ENCODE measurements at regions of chr3 and their contacts with region 1.

Region 1: GRCh38 chr3:142447852-142448823 is at the start of gene XRN1:
- DNase-seq: peak; percentile 97
- H3K4me3 Mint-ChIP-seq: peak within 1 kb of the TSS; percentile 95
- H3K27ac Mint-ChIP-seq: peak within 1 kb of the TSS; percentile 96
- H3K4me1 Mint-ChIP-seq: peaks cover 31% of the 10 kb centered on the region
- H3K27me3 Mint-ChIP-seq: no peaks in the 10 kb centered on the region
- total RNA-seq, gene XRN1: 58.4 to 67.8 TPM

Region 2: GRCh38 chr3:141487521-141488252 is 960.5 kb before region 1 on chr3:
- CTCF ChIA-PET with region 1: no interaction called
- POLR2A ChIA-PET with region 1: no interaction called
- intact Hi-C with region 1: loop called (anchors 2 kb)
- DNase-seq: peak; percentile 94
- H3K4me3 Mint-ChIP-seq: peak overlapping the region; percentile 84
- H3K27ac Mint-ChIP-seq: peak overlapping the region; percentile 94
- H3K4me1 Mint-ChIP-seq: peaks cover 67% of the 10 kb centered on the region
- H3K27me3 Mint-ChIP-seq: no peaks in the 10 kb centered on the region

Region 3: DNA sequence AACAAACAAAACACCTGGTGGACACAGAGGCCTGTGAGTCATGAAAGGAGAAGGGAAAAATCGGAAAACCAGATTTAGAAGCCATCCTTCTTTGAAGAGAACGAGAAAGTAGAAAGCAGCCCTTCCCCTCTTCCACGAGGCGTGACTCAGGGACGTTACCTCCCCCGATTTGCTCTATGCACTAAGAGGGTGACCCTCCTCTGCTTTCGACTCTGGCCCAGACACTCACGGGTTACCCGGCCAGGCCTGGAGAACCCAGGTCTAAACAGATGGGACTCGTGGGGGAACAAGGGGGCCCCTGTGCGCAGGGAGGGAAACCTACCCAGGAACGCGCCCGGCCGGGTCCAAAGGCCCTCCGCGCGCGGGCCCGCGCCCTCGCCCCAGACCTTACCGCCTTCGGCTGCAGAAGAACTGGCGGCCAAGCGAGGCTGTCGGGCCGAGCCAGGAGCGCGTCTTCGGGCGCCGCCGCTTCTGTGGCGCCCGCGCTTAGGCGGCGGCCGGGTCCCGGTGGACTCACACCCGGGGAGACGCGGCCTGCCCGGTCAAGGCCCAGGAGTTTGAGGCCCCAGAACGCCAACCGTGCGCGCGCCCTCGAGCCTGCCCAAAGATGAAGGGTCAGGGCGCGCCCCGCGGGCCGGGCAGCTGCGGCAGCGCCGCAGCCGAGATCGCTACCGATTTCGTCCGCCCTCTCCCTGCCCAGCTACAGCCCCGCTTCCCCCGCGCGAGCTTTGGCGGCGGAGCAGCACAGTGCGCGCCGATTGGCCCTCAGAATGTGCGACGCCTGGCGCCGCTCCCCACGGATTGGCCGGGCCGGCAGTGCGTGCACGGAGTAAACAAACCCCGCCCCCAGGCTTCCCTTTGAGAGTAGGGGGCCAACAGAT is 299.1 kb before region 1 on chr3 and contains the start of gene TFDP2:
- CTCF ChIA-PET with region 1: no interaction called
- POLR2A ChIA-PET with region 1: no interaction called
- intact Hi-C with region 1: loop called (anchors 5 kb)
- DNase-seq: peak; percentile 90
- H3K4me3 Mint-ChIP-seq: peak within 1 kb of the TSS; percentile 79
- H3K27ac Mint-ChIP-seq: no peak within 1 kb of the TSS
- H3K4me1 Mint-ChIP-seq: peaks cover 26% of the 10 kb centered on the region
- H3K27me3 Mint-ChIP-seq: no peaks in the 10 kb centered on the region
- total RNA-seq, gene TFDP2: 19.1 to 21.5 TPM

Region 4: DNA sequence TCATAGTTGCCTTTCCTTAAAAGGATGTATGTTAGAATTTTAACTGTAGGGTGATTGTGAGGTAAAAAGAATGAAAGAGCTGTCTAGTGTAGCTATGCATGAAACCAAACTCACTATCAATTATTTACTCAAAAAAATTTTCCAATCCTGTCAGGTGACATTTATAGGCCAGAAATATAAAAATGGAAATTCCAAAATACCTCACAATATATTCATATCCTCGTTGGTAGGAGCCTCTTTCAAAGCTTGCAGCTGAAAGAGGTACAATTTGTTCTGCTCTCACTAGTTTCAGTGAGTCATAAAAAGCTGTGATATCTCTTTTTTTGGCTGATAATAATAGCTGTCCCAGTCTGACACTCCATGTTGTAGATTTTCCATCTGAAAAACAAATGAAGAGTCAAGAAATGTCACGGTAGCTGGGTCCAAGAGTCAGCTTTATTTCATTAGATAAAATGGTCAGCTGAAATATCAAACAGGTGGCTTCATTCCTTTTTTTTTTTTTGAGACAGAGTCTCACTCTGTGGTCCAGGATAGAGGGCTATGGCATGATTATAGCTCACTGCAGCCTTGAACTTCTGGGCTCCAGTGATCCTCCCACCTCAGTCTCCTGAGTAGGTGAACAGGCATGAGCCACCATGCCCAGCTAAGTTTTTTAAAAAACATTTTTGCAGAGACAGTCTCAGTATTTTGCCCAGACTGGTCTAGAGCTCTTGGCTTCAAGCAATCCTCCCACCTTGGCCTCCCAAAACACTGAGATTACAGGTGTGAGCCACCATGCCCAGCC is 50.5 kb after region 1 on chr3:
- CTCF ChIA-PET with region 1: interaction called, 3 read pairs
- POLR2A ChIA-PET with region 1: no interaction called
- intact Hi-C with region 1: loop called (anchors 2 kb)
- DNase-seq: no peak
- H3K4me3 Mint-ChIP-seq: no peak overlapping the region
- H3K27ac Mint-ChIP-seq: peak overlapping the region; percentile 54
- H3K4me1 Mint-ChIP-seq: peaks cover 17% of the 10 kb centered on the region
- H3K27me3 Mint-ChIP-seq: no peaks in the 10 kb centered on the region

Region 5: GRCh38 chr3:142723968-142724681 is 276.0 kb after region 1 on chr3 and contains the start of gene TRPC1:
- CTCF ChIA-PET with region 1: no interaction called
- POLR2A ChIA-PET with region 1: no interaction called
- intact Hi-C with region 1: loop called (anchors 1 kb)
- DNase-seq: peak; percentile 87
- H3K4me3 Mint-ChIP-seq: peak within 1 kb of the TSS; percentile 85
- H3K27ac Mint-ChIP-seq: peak within 1 kb of the TSS; percentile 82
- H3K4me1 Mint-ChIP-seq: peaks cover 14% of the 10 kb centered on the region
- H3K27me3 Mint-ChIP-seq: peaks cover 15% of the 10 kb centered on the region
- total RNA-seq, gene TRPC1: 2.8 to 3.8 TPM

Measured in activated CD4-positive, alpha-beta memory T cell treated with anti-CD3 and anti-CD28 coated beads for 36 hours (primary cell).